ENCODE measurements at regions of chr16 and their contacts with region 1.

Region 1: GRCh38 chr16:82263521-82264143 is 93.6 kb upstream of the MPHOSPH6 start:
- DNase-seq: peak in 8 of 9 donors; percentile 0 to 49 (median 32)
- ATAC-seq: peak; percentile 70
- H3K4me3 ChIP-seq: no peak overlapping the region
- H3K4me3 Mint-ChIP-seq: no peak overlapping the region
- H3K27ac ChIP-seq: no peak overlapping the region
- H3K27ac Mint-ChIP-seq: no peak overlapping the region
- H3K4me1 ChIP-seq: no peaks in the 10 kb centered on the region
- H3K4me1 Mint-ChIP-seq: no peaks in the 10 kb centered on the region
- H3K27me3 ChIP-seq: no peaks in the 10 kb centered on the region
- H3K27me3 Mint-ChIP-seq: peaks cover 9 to 21% (median 15%) of the 10 kb centered on the region in 5 donors

Region 2: GRCh38 chr16:82456683-82457082 is 193.1 kb after region 1 on chr16:
- CTCF ChIA-PET with region 1: no interaction called
- POLR2A ChIA-PET with region 1: no interaction called
- intact Hi-C with region 1: no loop called
- DNase-seq: peak in 1 of 9 donors; percentile 24
- ATAC-seq: peak; percentile 63
- H3K4me3 ChIP-seq: no peak overlapping the region
- H3K4me3 Mint-ChIP-seq: no peak overlapping the region
- H3K27ac ChIP-seq: no peak overlapping the region
- H3K27ac Mint-ChIP-seq: no peak overlapping the region
- H3K4me1 ChIP-seq: peaks cover 0 to 24% of the 10 kb centered on the region in 2 donors
- H3K4me1 Mint-ChIP-seq: peaks cover 0 to 6% (median 0%) of the 10 kb centered on the region in 7 donors
- H3K27me3 ChIP-seq: peaks cover 0 to 3% of the 10 kb centered on the region in 2 donors
- H3K27me3 Mint-ChIP-seq: peaks cover 3 to 29% (median 13%) of the 10 kb centered on the region in 5 donors

Region 3: GRCh38 chr16:82639666-82640336 is 376.2 kb after region 1 on chr16:
- CTCF ChIA-PET with region 1: no interaction called
- POLR2A ChIA-PET with region 1: no interaction called
- intact Hi-C with region 1: loop called in 1 of 2 experiments (anchors 10 kb)
- DNase-seq: peak in 4 of 9 donors; percentile 14 to 50 (median 20)
- ATAC-seq: peak; percentile 76
- H3K4me3 ChIP-seq: no peak overlapping the region
- H3K4me3 Mint-ChIP-seq: no peak overlapping the region
- H3K27ac ChIP-seq: no peak overlapping the region
- H3K27ac Mint-ChIP-seq: no peak overlapping the region
- H3K4me1 ChIP-seq: peaks cover 0 to 4% of the 10 kb centered on the region in 2 donors
- H3K4me1 Mint-ChIP-seq: peaks cover 0 to 22% (median 0%) of the 10 kb centered on the region in 7 donors
- H3K27me3 ChIP-seq: no peaks in the 10 kb centered on the region
- H3K27me3 Mint-ChIP-seq: peaks cover 0 to 6% (median 4%) of the 10 kb centered on the region in 5 donors

Region 4: DNA sequence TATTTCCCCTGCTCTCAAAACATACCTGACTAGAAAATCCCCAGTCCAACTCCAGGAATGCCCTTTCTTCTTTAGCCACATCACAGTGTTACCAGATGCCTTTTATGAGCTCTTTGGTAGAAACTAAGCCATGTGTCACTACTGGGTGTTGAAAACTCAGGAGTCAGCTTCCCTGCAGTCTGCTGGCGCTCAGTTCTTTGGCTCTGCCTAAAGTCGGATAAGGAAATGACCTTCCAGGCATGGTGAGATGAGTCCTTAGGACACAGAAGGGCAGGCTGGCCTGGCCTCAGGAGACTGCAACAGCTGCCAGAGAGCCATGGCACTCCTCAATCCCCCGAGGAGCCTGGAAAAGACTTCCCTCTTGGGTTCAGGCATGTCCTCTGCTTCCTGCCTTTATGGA is 452.2 kb after region 1 on chr16:
- CTCF ChIA-PET with region 1: no interaction called
- POLR2A ChIA-PET with region 1: no interaction called
- intact Hi-C with region 1: loop called in 1 of 2 experiments (anchors 5 kb)
- DNase-seq: no peak
- ATAC-seq: no peak
- H3K4me3 ChIP-seq: no peak overlapping the region
- H3K4me3 Mint-ChIP-seq: no peak overlapping the region
- H3K27ac ChIP-seq: no peak overlapping the region
- H3K27ac Mint-ChIP-seq: no peak overlapping the region
- H3K4me1 ChIP-seq: no peaks in the 10 kb centered on the region
- H3K4me1 Mint-ChIP-seq: peaks cover 0 to 4% (median 0%) of the 10 kb centered on the region in 7 donors
- H3K27me3 ChIP-seq: no peaks in the 10 kb centered on the region
- H3K27me3 Mint-ChIP-seq: peaks cover 0 to 14% (median 4%) of the 10 kb centered on the region in 5 donors

Region 5: DNA sequence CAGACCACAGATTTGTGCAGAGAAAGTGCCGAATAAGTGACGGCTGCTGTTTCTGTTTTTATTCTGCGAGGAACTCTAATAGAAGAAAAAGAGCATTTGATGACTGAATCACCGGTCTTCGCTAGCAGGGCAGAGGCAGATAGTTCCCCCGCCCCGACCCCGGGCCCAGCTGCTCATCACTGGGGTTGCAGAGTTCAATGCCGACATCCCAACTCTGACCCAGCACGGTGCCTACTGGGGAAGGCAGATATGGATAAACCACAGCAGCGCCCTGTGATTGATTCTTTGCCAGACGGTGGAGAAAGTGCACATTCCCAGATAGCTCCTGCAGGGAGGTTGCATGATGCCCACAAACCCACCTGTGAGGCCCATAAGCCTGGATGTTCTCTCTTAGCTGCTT is 1186.2 kb after region 1 on chr16:
- CTCF ChIA-PET with region 1: interaction called, 3 read pairs
- POLR2A ChIA-PET with region 1: no interaction called
- intact Hi-C with region 1: loop called in 1 of 2 experiments (anchors 5 kb)
- DNase-seq: no peak
- ATAC-seq: no peak
- H3K4me3 ChIP-seq: no peak overlapping the region
- H3K4me3 Mint-ChIP-seq: no peak overlapping the region
- H3K27ac ChIP-seq: no peak overlapping the region
- H3K27ac Mint-ChIP-seq: no peak overlapping the region
- H3K4me1 ChIP-seq: no peaks in the 10 kb centered on the region
- H3K4me1 Mint-ChIP-seq: no peaks in the 10 kb centered on the region
- H3K27me3 ChIP-seq: no peaks in the 10 kb centered on the region
- H3K27me3 Mint-ChIP-seq: peaks cover 0 to 7% (median 0%) of the 10 kb centered on the region in 5 donors